CD4-positive, alpha-beta T cell (primary cell): ENCODE measurements at regions of chr4 and their contacts with region 1.

Region 1: GRCh38 chr4:142846729-142847596 is 862 bp upstream of the INPP4B start:
- DNase-seq: peak; percentile 63 to 87 (median 70)
- ATAC-seq: peak; percentile 87
- H3K4me3 ChIP-seq: peak overlapping the region; percentile 67
- H3K4me3 Mint-ChIP-seq: peak overlapping the region; percentile 89
- H3K27ac ChIP-seq: no peak overlapping the region
- H3K27ac Mint-ChIP-seq: peak overlapping the region; percentile 47
- H3K4me1 ChIP-seq: peaks cover 24% of the 10 kb centered on the region
- H3K4me1 Mint-ChIP-seq: peaks cover 14% of the 10 kb centered on the region
- H3K27me3 ChIP-seq: peaks cover 4 to 12% of the 10 kb centered on the region in 2 experiments
- H3K27me3 Mint-ChIP-seq: peaks cover 22% of the 10 kb centered on the region
- CTCF ChIP-seq: peak; percentile 70

Region 2: GRCh38 chr4:140861359-140862176 is 1985.4 kb before region 1 on chr4:
- CTCF ChIA-PET with region 1: no interaction called
- POLR2A ChIA-PET with region 1: no interaction called
- intact Hi-C with region 1: loop called in 1 of 2 experiments (anchors 2 kb)
- DNase-seq: peak in 12 of 14 experiments; percentile 0 to 69 (median 10)
- ATAC-seq: no peak
- H3K4me3 ChIP-seq: no peak overlapping the region
- H3K4me3 Mint-ChIP-seq: no peak overlapping the region
- H3K27ac ChIP-seq: no peak overlapping the region
- H3K27ac Mint-ChIP-seq: no peak overlapping the region
- H3K4me1 ChIP-seq: peaks cover 4% of the 10 kb centered on the region
- H3K4me1 Mint-ChIP-seq: no peaks in the 10 kb centered on the region
- H3K27me3 ChIP-seq: no peaks in the 10 kb centered on the region
- H3K27me3 Mint-ChIP-seq: peaks cover 21% of the 10 kb centered on the region
- CTCF ChIP-seq: peak; percentile 80

Region 3: GRCh38 chr4:141307241-141307689 is 1539.7 kb before region 1 on chr4:
- CTCF ChIA-PET with region 1: no interaction called
- POLR2A ChIA-PET with region 1: interaction called, 3 read pairs
- intact Hi-C with region 1: loop called (anchors 1 kb)
- DNase-seq: peak; percentile 6 to 78 (median 28)
- ATAC-seq: peak; percentile 93
- H3K4me3 ChIP-seq: no peak overlapping the region
- H3K4me3 Mint-ChIP-seq: no peak overlapping the region
- H3K27ac ChIP-seq: no peak overlapping the region
- H3K27ac Mint-ChIP-seq: no peak overlapping the region
- H3K4me1 ChIP-seq: peaks cover 3% of the 10 kb centered on the region
- H3K4me1 Mint-ChIP-seq: no peaks in the 10 kb centered on the region
- H3K27me3 ChIP-seq: no peaks in the 10 kb centered on the region
- H3K27me3 Mint-ChIP-seq: peaks cover 4% of the 10 kb centered on the region
- CTCF ChIP-seq: peak; percentile 70

Region 4: DNA sequence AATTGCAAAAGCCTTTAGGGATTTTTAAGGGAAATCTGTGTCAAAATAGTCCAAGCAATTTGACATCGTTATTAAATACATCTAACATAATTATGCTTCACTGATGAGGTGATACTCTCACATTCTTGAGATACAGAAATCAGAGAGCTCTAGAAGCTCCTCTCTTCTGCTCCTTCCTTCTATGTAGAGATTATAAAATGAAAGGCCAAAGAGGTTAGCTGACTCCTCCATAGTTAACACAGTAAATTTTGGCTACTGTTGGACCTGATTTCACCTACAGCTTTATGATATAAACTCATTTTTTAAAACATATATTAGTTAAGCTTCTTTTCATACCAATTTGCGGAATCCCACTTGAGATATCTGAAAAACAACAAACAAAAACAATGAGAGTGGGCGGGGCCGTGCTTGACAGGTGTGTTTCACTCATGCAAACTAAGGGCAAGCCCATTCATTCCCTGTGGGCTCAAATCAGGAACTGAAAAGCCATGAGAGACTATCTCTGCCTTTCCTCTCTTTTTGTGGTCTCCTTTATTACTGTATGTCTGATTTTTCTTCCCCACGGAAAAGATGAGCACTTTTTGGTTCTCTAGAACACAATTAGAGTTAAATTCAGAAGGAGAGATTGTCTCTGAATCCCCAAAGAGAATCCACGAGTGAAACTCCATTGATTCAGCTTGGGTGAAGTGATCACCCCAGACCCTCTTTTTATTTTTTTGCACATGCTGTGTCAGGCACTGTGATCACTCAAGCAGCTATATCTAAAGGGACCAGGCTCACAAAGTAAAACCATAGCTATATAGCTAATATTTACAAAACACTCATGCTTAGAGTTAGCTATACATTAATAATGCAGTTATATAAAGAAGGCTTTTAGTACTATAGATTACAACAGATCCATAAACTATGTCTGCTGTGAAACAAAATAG is 644.3 kb before region 1 on chr4:
- CTCF ChIA-PET with region 1: no interaction called
- POLR2A ChIA-PET with region 1: no interaction called
- intact Hi-C with region 1: loop called in 1 of 2 experiments (anchors 10 kb)
- DNase-seq: no peak
- ATAC-seq: no peak
- H3K4me3 ChIP-seq: no peak overlapping the region
- H3K4me3 Mint-ChIP-seq: no peak overlapping the region
- H3K27ac ChIP-seq: no peak overlapping the region
- H3K27ac Mint-ChIP-seq: no peak overlapping the region
- H3K4me1 ChIP-seq: no peaks in the 10 kb centered on the region
- H3K4me1 Mint-ChIP-seq: peaks cover 29% of the 10 kb centered on the region
- H3K27me3 ChIP-seq: no peaks in the 10 kb centered on the region
- H3K27me3 Mint-ChIP-seq: no peaks in the 10 kb centered on the region
- CTCF ChIP-seq: no peak

Region 5: DNA sequence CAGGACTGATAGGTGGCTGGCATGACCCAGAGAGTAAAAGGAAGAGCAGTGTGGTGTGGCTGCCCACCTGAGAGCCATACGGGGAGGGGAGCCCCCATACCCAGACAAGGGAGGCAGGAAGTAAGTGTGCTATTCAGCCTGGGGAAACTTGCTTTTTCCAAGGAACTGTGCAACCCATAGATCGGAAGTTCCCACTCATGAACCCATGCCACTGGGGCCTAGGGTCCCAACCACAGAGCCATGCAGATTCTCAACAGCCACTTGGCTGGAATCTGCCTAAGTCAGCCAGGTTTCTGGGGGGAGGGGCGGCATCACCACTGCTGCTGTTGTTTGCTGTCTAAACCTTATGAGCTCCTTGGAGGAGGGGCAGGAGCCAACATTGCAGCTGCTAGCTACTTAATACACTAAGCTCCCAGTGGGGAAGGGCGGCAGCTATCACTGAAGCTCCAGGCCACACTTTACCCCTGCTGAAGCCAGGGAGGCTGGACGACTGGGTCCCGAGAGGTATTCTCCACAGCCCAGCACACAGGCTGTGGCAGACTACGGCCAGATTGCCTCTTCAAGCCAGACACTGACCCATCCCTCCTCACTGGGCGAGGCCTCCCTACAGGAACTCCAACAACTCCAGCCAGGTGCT is 411.2 kb before region 1 on chr4:
- CTCF ChIA-PET with region 1: no interaction called
- POLR2A ChIA-PET with region 1: no interaction called
- intact Hi-C with region 1: loop called in 1 of 2 experiments (anchors 10 kb)
- DNase-seq: no peak
- ATAC-seq: no peak
- H3K4me3 ChIP-seq: no peak overlapping the region
- H3K4me3 Mint-ChIP-seq: no peak overlapping the region
- H3K27ac ChIP-seq: no peak overlapping the region
- H3K27ac Mint-ChIP-seq: no peak overlapping the region
- H3K4me1 ChIP-seq: no peaks in the 10 kb centered on the region
- H3K4me1 Mint-ChIP-seq: peaks cover 20% of the 10 kb centered on the region
- H3K27me3 ChIP-seq: no peaks in the 10 kb centered on the region
- H3K27me3 Mint-ChIP-seq: no peaks in the 10 kb centered on the region
- CTCF ChIP-seq: no peak

Region 6: DNA sequence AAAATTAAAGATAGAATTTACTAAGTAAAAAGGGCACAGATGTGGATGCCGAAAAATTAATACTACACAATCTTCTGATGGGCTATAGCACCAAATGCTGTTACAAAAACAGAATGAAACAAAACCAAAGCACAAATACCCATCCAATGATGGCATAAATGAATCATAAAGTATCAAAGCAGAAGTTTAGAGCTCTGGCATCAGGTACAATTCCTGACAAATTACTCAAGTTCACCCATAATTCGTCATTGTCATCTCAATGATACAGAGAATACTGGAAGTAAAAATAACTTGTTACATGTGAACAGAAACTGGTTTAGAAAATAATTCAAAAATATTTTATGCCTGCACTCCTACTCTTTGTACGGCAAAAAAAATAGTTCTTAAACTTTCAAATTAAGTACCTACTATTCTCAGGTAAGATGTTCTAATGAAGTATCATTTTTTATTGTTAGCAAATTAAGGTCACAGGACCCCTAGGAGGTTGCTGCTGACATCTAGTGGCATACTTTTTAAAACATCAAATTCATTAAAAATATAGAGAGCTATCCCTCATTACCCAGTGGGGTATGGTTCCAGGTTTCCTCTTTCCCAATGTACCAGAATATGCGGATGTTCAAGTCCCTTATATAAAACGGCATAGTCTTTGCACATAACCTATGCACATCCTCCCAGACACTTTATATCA is 127.0 kb before region 1 on chr4:
- CTCF ChIA-PET with region 1: no interaction called
- POLR2A ChIA-PET with region 1: no interaction called
- intact Hi-C with region 1: loop called in 1 of 2 experiments (anchors 10 kb)
- DNase-seq: peak in 4 of 14 experiments; percentile 18 to 68 (median 65)
- ATAC-seq: peak; percentile 73
- H3K4me3 ChIP-seq: no peak overlapping the region
- H3K4me3 Mint-ChIP-seq: peak overlapping the region; percentile 31
- H3K27ac ChIP-seq: no peak overlapping the region
- H3K27ac Mint-ChIP-seq: peak overlapping the region; percentile 71
- H3K4me1 ChIP-seq: peaks cover 8% of the 10 kb centered on the region
- H3K4me1 Mint-ChIP-seq: peaks cover 43% of the 10 kb centered on the region
- H3K27me3 ChIP-seq: no peaks in the 10 kb centered on the region
- H3K27me3 Mint-ChIP-seq: no peaks in the 10 kb centered on the region
- CTCF ChIP-seq: peak; percentile 86

Region 7: GRCh38 chr4:142812091-142812490 is 34.9 kb before region 1 on chr4:
- CTCF ChIA-PET with region 1: no interaction called
- POLR2A ChIA-PET with region 1: no interaction called
- intact Hi-C with region 1: no loop called
- DNase-seq: no peak
- ATAC-seq: no peak
- H3K4me3 ChIP-seq: no peak overlapping the region
- H3K4me3 Mint-ChIP-seq: no peak overlapping the region
- H3K27ac ChIP-seq: no peak overlapping the region
- H3K27ac Mint-ChIP-seq: no peak overlapping the region
- H3K4me1 ChIP-seq: no peaks in the 10 kb centered on the region
- H3K4me1 Mint-ChIP-seq: peaks cover under 1% of the 10 kb centered on the region
- H3K27me3 ChIP-seq: no peaks in the 10 kb centered on the region
- H3K27me3 Mint-ChIP-seq: no peaks in the 10 kb centered on the region
- CTCF ChIP-seq: no peak

Region 8: DNA sequence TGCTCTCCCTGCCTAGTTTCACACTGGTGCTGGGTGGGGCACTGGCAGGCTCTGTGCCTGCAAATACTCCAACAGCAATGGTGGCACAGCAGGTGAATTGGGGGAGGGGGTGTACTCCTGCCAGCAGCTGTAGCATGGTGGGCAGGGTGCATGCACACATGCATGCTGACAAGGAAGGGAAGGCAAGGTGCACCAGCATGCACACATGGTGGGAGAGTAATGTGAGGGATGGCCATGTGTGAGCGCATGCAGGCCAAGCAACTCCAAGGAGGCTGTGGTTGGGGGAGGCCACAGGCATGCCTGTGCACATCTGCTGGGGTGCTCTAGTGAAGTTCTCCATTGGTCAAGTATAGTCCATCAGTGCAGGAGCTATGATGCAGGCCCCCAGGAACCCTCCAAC is 53.7 kb after region 1 on chr4:
- CTCF ChIA-PET with region 1: no interaction called
- POLR2A ChIA-PET with region 1: no interaction called
- intact Hi-C with region 1: no loop called
- DNase-seq: no peak
- ATAC-seq: no peak
- H3K4me3 ChIP-seq: no peak overlapping the region
- H3K4me3 Mint-ChIP-seq: no peak overlapping the region
- H3K27ac ChIP-seq: no peak overlapping the region
- H3K27ac Mint-ChIP-seq: no peak overlapping the region
- H3K4me1 ChIP-seq: no peaks in the 10 kb centered on the region
- H3K4me1 Mint-ChIP-seq: no peaks in the 10 kb centered on the region
- H3K27me3 ChIP-seq: no peaks in the 10 kb centered on the region
- H3K27me3 Mint-ChIP-seq: peaks cover 4% of the 10 kb centered on the region
- CTCF ChIP-seq: no peak